ENCODE measurements at regions of chr11 and their contacts with region 1.

Region 1: DNA sequence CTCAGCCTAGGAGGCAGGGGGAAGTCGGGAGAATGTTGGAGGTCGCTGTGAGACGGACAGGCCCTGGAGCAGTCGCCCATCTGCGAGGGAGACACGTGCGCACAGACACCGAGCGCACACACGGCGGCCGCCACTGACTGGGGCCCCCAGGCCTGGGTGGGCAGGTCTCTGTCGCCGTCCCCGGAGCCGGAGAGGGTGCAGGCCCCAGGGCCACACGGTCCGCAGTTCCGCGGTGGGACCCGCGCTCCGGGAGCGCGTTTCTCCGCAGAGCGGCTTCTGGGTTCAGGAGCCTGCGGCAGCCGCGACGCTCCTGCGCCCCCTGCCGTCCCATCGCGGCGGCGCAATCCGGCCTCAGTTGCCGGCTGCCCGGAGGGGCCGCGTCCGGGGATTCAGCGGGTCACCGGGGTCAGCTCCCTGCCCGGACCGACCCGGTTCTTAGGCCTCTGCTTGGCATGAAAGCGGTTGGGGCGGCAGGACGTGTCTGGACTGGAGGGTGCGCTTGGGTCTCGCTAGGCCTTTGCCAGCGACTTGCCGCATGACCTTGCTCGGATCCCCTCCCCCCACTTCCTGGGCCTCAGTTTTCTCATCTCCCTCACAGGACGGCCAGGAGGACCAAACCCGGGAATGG is 31.2 kb downstream of the PDE2A start:
- DNase-seq: peak; percentile 79
- ATAC-seq: peak; percentile 82

Region 2: GRCh38 chr11:72471005-72471898 is 171.7 kb before region 1 on chr11:
- intact Hi-C with region 1: loop called (anchors 10 kb)
- DNase-seq: peak; percentile 75
- ATAC-seq: peak; percentile 94

Region 3: GRCh38 chr11:72588421-72589410 is 54.3 kb before region 1 on chr11:
- intact Hi-C with region 1: loop called (anchors 1 kb)
- DNase-seq: no peak
- ATAC-seq: no peak

Region 4: DNA sequence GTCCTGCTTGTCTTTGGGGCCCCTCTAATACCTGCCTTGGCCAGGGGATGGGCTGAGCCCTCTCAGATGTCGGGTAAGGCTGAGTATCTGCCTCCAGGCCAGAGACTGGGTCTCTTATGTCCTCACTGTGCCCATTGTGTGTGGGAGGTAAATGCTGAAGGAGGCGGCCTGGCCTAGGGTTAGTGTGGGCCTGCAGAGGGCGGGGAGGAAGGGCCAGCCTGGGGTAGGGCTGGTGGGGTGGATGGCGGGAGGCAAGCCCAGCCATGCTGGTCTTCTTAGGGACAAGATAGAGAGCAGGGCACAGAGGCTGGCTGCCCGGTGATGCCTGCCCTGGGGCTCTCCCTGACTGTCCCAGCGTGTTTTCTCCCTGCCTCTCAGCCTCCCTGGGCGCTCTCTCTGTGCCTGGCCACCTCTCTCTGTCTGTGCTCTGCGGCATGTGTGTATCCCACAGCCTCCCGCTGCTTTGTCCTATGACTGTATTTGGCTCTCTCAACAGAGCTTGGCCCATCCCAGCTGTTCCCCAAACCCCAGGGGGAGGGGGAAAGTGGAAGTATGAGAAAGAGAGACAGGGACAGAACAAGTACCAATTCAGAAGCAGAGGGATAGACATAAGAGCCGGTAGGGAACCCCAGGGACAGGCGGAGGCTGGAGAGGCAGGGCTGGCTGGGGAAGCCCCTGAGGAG is 25.8 kb before region 1 on chr11:
- intact Hi-C with region 1: no loop called
- DNase-seq: no peak
- ATAC-seq: peak; percentile 78